Right ventricle myocardium inferior (tissue), 1 donor: ENCODE measurements at regions of chr15 and their contacts with region 1.

Region 1: DNA sequence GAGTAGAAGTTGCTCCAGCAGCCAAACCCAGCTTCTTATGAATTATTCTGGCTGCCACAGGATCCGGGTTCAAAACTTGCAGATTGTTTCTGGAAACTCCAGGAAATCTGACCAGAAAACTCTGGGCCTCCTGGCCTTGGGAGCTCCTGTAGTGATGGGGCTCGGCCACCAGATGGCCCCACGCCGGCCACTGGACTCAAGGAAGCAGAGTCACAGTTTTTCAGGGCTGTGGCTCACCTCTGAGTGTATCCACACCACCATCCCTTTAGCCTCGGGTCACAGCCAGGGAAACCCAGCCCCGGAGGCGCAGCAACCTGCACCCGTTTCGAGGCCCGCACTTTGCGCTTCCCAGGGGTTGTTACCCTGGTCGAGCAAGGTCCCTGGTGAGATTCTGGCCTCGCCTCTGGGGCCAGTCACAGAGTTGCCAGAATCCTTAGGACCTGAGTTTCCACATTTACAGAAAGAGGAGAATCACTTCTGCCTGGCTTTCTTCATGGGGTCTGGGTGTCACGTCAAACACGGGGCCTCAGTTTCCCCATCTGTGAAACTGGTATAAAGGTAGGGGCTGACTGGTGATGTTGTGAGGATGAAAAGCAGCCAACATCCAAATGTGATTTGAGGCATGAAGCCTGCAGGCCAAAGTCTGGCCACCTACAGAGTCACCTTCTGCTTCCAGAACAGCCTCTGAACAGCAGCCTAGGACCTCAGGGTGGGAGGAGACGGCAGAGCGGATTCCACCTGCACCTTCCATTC is 53.5 kb upstream of the LCTL start:
- DNase-seq: peak; percentile 87
- ATAC-seq: peak; percentile 72

Region 2: DNA sequence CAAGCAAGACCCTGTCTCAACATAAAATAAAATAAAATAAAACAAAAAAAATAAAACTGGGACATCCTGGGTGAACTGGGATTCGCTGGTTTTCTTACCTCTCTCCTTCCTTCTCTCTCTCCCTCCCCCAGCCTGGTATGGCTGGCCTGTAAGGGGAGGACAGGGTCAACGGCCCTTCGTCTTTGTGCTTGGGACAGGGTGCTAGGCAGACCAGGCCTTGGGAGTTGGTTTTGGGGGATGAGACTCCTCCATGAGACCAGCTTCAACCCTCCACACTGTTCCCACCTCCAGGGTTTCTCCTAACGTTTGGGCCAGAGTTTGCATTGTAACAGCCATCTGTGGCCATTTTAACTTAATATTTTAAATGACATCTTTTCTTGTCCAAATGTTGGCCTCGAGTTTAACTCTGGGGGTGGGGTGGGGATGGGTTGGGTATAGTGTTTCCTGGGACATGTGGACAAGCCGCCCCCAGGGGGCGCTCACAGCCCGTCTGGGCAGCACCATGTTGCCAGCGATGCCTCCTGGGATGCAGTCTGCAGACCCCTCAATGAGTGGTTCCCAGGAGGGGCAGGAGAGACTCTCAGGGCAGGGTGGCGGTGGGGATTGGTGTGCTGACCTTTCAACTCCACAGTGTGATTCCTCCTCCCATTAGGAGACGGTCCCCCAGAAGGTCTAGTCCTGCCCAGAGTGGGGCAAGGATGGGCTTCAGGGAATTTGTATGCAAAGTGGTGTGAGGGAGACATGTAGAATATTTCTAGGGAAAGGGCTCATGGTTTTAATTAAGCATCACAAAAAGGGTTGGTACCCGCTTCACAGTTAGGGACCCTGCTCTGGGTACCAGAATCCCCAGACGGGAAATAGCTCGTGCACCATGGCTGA is 15.8 kb before region 1 on chr15:
- intact Hi-C with region 1: no loop called
- DNase-seq: peak; percentile 89
- ATAC-seq: peak; percentile 71

Region 3: DNA sequence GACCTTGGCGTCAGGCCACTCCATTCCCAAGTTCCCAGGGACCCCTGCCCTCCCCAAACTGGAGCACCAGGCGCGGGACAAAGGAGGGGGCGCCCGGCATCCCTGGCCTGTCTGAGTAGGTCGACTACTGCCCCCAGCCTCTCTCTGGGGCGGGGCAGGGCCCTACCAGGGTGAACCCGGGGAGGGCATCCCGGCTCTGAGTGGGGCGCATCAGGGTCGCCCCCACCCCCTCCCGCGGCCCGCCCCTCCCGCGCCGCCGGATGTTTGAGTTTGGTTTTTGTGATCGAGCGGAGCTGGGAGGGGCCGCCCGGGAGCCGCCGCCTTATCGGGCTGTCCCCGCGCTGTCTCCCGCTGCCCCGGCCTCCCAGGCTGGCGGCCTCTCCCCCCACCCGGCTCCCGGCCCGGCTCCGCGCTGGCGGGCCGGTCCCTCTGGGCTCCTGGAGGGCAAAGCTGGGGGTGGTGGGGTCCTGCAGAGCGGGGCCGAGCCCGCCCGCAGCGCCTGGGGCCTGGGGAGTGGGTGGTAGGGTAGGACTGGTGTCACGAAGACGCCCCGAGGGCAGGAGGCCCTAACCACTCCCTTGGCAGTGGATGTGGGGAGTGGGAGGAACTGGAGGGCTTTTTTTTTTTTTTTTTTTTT is 35.5 kb after region 1 on chr15:
- intact Hi-C with region 1: loop called (anchors 5 kb)
- DNase-seq: peak; percentile 69
- ATAC-seq: peak; percentile 55

Region 4: GRCh38 chr15:66774001-66774814 is 154.9 kb after region 1 on chr15:
- intact Hi-C with region 1: loop called (anchors 2 kb)
- DNase-seq: peak; percentile 89
- ATAC-seq: peak; percentile 94